ENCODE measurements at regions of chr7 and their contacts with region 1.

Region 1: DNA sequence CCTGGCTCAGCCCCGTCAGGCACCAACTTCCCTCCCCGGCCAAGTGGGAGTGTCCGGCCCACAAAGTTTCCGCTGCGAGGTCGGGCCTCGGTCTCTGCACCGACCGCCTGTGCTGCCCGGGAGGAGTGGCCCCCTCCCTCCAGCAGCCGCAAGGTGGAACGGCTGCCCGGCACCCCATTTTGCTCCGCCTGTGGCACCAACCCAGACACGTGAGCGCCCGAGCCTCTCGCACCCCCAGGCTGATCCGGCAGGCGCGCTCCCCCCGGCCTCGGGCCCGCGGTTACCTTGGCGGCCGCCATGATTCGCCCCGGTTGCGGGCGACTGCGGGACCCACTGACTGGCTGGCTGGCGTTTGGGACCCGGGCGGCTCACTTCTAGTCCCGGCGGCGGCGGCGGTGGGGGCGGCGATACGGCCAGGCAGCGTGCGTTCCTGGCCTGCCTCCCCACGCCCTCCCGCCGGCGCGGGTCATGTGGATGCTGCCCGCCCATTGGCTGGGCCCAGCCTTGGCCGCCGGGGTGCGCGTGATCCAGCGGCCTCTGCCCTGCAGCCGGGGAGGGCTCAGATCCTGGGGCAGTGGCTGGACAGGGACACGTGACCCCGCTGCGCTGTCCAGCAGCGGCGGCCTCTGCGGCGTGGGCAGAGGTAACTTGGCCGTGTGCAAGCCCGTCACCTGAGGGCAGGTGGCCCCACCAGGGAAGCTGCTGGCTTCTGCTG is at the start of gene SLC25A13:
- DNase-seq: peak; percentile 85
- H3K4me3 Mint-ChIP-seq: peak within 1 kb of the TSS; percentile 88
- H3K27ac Mint-ChIP-seq: peak within 1 kb of the TSS; percentile 90
- H3K4me1 Mint-ChIP-seq: peaks cover 16% of the 10 kb centered on the region
- H3K27me3 Mint-ChIP-seq: no peaks in the 10 kb centered on the region
- CTCF ChIP-seq: no peak
- total RNA-seq, gene SLC25A13: 23.4 and 28.6 TPM in 2 replicates

Region 2: GRCh38 chr7:96061844-96062243 is 260.0 kb before region 1 on chr7:
- CTCF ChIA-PET with region 1: no interaction called
- POLR2A ChIA-PET with region 1: no interaction called
- intact Hi-C with region 1: no loop called
- DNase-seq: peak; percentile 75
- H3K4me3 Mint-ChIP-seq: no peak overlapping the region
- H3K27ac Mint-ChIP-seq: no peak overlapping the region
- H3K4me1 Mint-ChIP-seq: peaks cover 6% of the 10 kb centered on the region
- H3K27me3 Mint-ChIP-seq: peaks cover 99% of the 10 kb centered on the region
- CTCF ChIP-seq: no peak

Region 3: GRCh38 chr7:96388620-96389383 is 67.0 kb after region 1 on chr7:
- CTCF ChIA-PET with region 1: no interaction called
- POLR2A ChIA-PET with region 1: interaction called, 4 read pairs
- intact Hi-C with region 1: loop called (anchors 5 kb)
- DNase-seq: peak; percentile 21
- H3K4me3 Mint-ChIP-seq: peak overlapping the region; percentile 27
- H3K27ac Mint-ChIP-seq: peak overlapping the region; percentile 25
- H3K4me1 Mint-ChIP-seq: peaks cover 25% of the 10 kb centered on the region
- H3K27me3 Mint-ChIP-seq: no peaks in the 10 kb centered on the region
- CTCF ChIP-seq: no peak

Region 4: GRCh38 chr7:96521068-96521894 is 199.5 kb after region 1 on chr7:
- CTCF ChIA-PET with region 1: no interaction called
- POLR2A ChIA-PET with region 1: no interaction called
- intact Hi-C with region 1: no loop called
- DNase-seq: no peak
- H3K4me3 Mint-ChIP-seq: no peak overlapping the region
- H3K27ac Mint-ChIP-seq: no peak overlapping the region
- H3K4me1 Mint-ChIP-seq: no peaks in the 10 kb centered on the region
- H3K27me3 Mint-ChIP-seq: peaks cover 87% of the 10 kb centered on the region
- CTCF ChIP-seq: no peak